ENCODE measurements at regions of chr11 and their contacts with region 1.

Region 1: GRCh38 chr11:26297189-26297975 is 34.5 kb upstream of the ANO3 start:
- DNase-seq: peak; percentile 42
- H3K4me3 ChIP-seq: no peak overlapping the region
- H3K27ac ChIP-seq: no peak overlapping the region
- H3K4me1 ChIP-seq: no peaks in the 10 kb centered on the region
- H3K27me3 ChIP-seq: no peaks in the 10 kb centered on the region
- CTCF ChIP-seq: peak; percentile 72 to 78

Region 2: DNA sequence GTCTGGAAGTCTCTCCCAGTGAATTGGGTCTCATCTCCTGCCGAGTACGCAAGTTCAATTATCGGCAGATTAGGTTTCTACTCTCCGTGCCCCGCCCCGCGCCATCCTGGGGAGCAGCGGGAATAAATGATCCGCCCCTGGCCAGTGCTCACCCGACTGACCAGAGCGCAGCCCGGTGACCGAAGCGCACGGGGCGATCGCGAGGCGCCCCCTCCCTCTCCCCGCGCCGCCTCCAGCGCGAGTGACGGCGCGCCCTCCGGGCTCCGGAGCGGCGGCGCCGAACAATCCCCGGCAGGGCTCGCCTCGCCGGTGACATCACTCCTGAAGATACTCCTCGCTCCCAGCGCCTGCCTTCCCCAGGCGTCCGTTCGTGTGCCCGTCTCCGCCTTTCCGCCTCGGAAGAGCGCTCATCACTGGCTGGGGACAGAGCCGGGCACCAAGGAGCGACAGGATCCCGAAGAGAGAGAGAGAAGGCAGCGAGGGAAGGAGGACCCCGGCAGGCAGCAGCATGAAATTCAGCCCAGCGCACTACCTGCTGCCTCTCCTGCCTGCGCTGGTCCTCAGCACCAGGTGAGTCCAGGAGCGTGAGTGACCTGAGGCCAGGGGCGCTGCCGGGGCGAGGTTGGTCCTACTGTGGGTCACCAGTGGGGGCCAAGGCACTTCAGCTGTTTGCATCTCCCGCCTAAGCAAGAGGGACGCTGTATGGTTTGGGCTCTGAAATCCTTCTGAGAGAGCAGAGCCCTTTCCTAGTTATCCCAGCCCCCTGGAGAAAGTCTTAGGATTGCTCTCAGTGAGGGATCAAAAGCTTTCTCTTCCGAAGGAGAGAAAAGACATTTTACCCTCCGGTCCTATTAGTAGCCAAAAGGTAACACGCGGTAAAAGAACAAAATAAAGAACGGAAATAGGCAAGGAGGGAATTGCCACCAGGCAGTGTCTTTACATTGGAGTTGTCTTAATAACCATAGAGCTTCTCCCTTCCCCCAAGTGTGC is 1800.4 kb before region 1 on chr11 and contains the start of gene LUZP2:
- CTCF ChIA-PET with region 1: no interaction called
- dilution Hi-C with region 1: no loop called
- in situ Hi-C with region 1: no loop called
- intact Hi-C with region 1: no loop called
- DNase-seq: peak; percentile 28
- H3K4me3 ChIP-seq: peak within 1 kb of the TSS; percentile 32 to 44 (median 43)
- H3K27ac ChIP-seq: no peak within 1 kb of the TSS
- H3K4me1 ChIP-seq: peaks cover 9% of the 10 kb centered on the region
- H3K27me3 ChIP-seq: peaks cover 14% of the 10 kb centered on the region
- CTCF ChIP-seq: peak in 1 of 2 donors; percentile 17
- total RNA-seq, gene LUZP2: under 0.01 TPM in 1 of 2 donors, not detected in the other

Region 3: GRCh38 chr11:26134481-26135355 is 162.7 kb before region 1 on chr11:
- CTCF ChIA-PET with region 1: no interaction called
- dilution Hi-C with region 1: no loop called
- in situ Hi-C with region 1: no loop called
- intact Hi-C with region 1: no loop called
- DNase-seq: peak; percentile 32
- H3K4me3 ChIP-seq: no peak overlapping the region
- H3K27ac ChIP-seq: no peak overlapping the region
- H3K4me1 ChIP-seq: no peaks in the 10 kb centered on the region
- H3K27me3 ChIP-seq: no peaks in the 10 kb centered on the region
- CTCF ChIP-seq: peak; percentile 20 to 35

Region 4: GRCh38 chr11:26247340-26247739 is 50.0 kb before region 1 on chr11:
- CTCF ChIA-PET with region 1: no interaction called
- dilution Hi-C with region 1: no loop called
- in situ Hi-C with region 1: no loop called
- intact Hi-C with region 1: no loop called
- DNase-seq: peak; percentile 61
- H3K4me3 ChIP-seq: no peak overlapping the region
- H3K27ac ChIP-seq: no peak overlapping the region
- H3K4me1 ChIP-seq: no peaks in the 10 kb centered on the region
- H3K27me3 ChIP-seq: peaks cover 2% of the 10 kb centered on the region
- CTCF ChIP-seq: no peak

Region 5: GRCh38 chr11:26268980-26269660 is 28.3 kb before region 1 on chr11:
- CTCF ChIA-PET with region 1: no interaction called
- dilution Hi-C with region 1: no loop called
- in situ Hi-C with region 1: no loop called
- intact Hi-C with region 1: no loop called
- DNase-seq: no peak
- H3K4me3 ChIP-seq: no peak overlapping the region
- H3K27ac ChIP-seq: no peak overlapping the region
- H3K4me1 ChIP-seq: no peaks in the 10 kb centered on the region
- H3K27me3 ChIP-seq: no peaks in the 10 kb centered on the region
- CTCF ChIP-seq: no peak

Region 6: DNA sequence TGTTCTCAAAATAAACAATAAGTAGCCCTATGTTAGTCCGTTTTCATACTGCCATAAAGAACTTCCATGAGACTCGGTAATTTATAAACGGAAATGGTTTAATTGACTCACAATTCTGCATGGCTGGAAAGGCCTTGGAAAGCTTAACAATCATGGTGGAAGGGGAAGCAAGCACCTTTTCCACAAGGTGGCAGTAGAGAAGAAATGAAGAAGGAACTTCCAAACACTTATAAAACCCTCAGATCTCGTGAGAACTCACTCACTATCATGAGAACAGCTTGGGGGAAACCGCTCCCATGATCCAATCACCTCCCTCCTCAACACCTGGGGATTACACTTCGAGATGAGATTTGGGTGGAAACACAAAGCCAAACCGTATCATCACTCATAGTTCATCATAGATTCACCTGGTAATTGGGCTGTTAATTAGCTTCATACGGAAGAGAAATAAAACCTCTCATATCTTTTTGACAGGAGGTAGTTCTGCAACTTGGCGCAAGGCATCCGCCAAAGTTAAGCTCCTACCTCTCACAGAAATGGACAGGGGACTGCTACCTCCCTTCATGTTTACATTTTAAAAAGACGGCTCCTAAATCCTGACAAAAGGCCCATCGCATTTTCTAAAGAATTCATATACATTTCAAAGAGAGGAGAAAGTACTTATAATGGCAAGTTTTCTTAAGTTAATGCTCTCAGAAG is 225.7 kb after region 1 on chr11:
- CTCF ChIA-PET with region 1: no interaction called
- dilution Hi-C with region 1: no loop called
- in situ Hi-C with region 1: no loop called
- intact Hi-C with region 1: loop called (anchors 10 kb)
- DNase-seq: peak; percentile 25
- H3K4me3 ChIP-seq: no peak overlapping the region
- H3K27ac ChIP-seq: no peak overlapping the region
- H3K4me1 ChIP-seq: no peaks in the 10 kb centered on the region
- H3K27me3 ChIP-seq: no peaks in the 10 kb centered on the region
- CTCF ChIP-seq: peak; percentile 37 to 65

Region 7: DNA sequence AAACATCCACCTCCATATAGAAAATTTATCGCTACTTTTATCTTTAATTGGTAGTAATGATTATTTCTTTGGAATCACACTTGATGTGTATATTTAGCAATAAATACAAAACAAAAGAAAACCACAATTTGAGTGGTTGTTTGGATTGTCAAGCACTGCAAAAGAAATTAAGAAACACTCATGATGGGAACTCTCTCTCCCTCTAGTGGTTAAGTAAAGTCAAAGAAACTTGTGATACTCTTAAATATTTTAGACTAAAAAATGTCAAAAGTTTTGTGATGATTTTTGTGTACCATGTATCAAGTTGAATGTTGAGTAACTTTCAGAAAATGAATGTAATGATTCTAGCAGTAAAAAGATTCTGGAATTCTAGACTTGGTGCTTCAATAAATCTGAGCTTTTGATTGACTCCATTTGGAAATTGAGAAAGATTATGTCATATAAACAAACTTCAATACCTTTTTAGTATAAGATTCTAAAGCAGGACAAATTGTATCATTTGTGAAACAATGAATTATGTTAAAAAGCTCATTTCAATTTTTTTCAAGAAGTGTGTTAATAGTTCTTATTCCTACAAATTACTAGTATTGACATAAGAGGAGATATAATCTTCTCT is 253.9 kb after region 1 on chr11:
- CTCF ChIA-PET with region 1: no interaction called
- dilution Hi-C with region 1: no loop called
- in situ Hi-C with region 1: no loop called
- intact Hi-C with region 1: loop called (anchors 1 kb)
- DNase-seq: peak; percentile 6
- H3K4me3 ChIP-seq: no peak overlapping the region
- H3K27ac ChIP-seq: no peak overlapping the region
- H3K4me1 ChIP-seq: no peaks in the 10 kb centered on the region
- H3K27me3 ChIP-seq: no peaks in the 10 kb centered on the region
- CTCF ChIP-seq: peak; percentile 33 to 55

Region 8: GRCh38 chr11:26649884-26650283 is 352.5 kb after region 1 on chr11:
- CTCF ChIA-PET with region 1: no interaction called
- dilution Hi-C with region 1: no loop called
- in situ Hi-C with region 1: loop called in 1 of 2 experiments (anchors 25 kb)
- intact Hi-C with region 1: loop called (anchors 1 kb)
- DNase-seq: peak; percentile 58
- H3K4me3 ChIP-seq: no peak overlapping the region
- H3K27ac ChIP-seq: no peak overlapping the region
- H3K4me1 ChIP-seq: no peaks in the 10 kb centered on the region
- H3K27me3 ChIP-seq: peaks cover 5% of the 10 kb centered on the region
- CTCF ChIP-seq: peak; percentile 72 to 77

Region 9: DNA sequence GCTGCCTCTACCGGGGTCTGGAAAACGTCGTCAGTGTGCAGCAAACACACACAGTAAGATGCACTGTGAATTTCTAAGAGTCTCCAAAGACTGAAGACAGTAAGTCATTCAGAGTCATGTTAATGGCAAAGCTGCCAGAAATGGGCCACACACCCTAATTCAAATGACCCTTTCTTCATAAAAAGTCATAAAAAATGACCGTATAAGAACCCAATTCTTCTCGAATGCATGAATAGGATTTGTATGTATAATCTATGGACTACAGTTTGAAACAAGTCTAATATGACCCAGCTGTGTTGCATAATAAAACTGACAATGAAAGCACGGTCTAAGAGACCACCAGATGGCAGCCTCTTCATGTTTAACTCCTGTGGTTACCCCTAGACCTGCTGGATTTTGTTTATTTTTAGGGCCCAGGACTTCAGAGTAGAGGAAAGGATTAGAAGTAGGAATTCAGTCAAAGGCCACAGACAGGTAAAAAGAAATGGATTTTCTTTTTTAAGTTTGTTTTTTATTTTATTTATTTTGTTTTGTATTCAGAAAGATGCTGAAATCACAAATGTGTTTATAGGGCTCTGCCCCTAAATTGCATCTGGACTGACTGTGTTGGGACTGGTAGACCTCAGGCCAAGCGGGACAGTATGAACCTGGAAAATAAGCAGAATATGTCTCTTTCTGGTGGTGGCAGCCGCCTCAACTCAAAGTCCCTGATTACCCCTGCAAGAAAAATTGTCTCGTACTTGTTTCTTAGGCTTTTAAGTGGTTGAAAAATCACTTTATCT is 456.5 kb after region 1 on chr11:
- CTCF ChIA-PET with region 1: no interaction called
- dilution Hi-C with region 1: no loop called
- in situ Hi-C with region 1: no loop called
- intact Hi-C with region 1: loop called (anchors 5 kb)
- DNase-seq: peak; percentile 40
- H3K4me3 ChIP-seq: no peak overlapping the region
- H3K27ac ChIP-seq: no peak overlapping the region
- H3K4me1 ChIP-seq: no peaks in the 10 kb centered on the region
- H3K27me3 ChIP-seq: no peaks in the 10 kb centered on the region
- CTCF ChIP-seq: peak; percentile 72 to 81